ENCODE measurements at regions of chr10 and their contacts with region 1.

Region 1: DNA sequence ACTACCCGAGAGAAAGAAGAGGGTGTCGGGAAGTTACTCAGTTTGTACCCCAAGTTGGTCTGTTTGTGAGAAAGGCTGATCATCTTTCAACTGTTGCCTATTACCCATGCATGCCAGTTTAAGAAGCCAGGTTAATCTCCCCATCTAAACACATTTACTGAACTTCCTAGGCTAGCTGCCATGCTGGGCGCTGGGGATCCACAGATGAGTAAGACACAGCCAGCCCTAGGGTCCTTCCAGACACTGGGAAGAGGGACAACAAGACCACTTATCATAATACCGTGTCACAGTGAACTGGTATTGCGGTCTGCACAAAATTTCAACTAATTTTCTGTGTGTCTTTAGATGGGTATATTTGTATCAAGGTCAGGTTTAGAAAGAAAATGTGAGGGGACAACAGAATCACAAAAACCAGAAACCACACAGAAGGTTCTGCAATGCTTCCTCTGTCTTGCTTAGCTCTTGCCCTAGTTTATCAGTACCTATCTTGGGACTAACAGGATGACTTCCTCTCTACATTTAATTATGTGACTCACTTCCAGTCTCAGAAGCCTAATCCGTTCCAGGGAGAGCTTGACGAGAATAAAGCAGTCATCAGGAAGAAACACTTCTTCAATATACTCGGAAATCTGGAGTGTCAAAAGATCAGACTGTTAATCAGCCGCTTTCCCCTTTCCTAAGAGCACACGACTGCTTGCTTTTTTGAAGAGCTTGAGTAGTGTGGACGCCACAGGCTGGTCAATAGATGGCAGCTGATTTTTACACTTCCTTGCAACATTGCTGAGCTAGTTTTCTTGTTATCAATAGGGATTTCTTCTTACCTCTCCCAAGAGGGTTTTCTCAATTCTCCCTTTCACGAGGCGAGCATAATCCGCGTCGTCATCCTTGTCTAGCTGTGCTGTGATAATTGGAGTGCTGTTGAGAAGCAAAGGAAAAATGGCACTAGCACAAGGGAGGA is 45.7 kb downstream of the POLR3A start:
- DNase-seq: no peak

Region 2: GRCh38 chr10:77837240-77837924 is 146.3 kb before region 1 on chr10:
- CTCF ChIA-PET with region 1: no interaction called
- POLR2A ChIA-PET with region 1: no interaction called
- DNase-seq: peak; percentile 46

Region 3: DNA sequence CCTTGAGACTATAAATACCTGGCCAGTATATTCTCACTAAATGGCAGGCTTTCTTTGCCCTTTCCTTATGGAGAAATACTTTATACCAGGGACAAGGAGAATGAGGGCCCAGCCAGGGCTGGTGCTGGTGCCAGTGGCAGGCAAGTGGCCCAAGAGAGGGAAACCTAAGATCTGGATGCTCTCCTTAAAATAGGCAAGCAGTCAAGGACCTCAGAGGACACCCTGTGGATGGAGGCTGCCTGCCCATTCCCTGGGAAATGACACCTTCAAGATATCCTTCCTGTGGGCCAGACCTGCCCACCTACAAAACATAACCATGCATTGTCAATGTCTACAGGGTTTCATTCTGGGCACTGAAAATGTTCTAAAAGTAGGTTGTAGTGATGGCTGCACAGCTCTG is 16.5 kb after region 1 on chr10:
- CTCF ChIA-PET with region 1: no interaction called
- POLR2A ChIA-PET with region 1: no interaction called
- DNase-seq: no peak

Region 4: DNA sequence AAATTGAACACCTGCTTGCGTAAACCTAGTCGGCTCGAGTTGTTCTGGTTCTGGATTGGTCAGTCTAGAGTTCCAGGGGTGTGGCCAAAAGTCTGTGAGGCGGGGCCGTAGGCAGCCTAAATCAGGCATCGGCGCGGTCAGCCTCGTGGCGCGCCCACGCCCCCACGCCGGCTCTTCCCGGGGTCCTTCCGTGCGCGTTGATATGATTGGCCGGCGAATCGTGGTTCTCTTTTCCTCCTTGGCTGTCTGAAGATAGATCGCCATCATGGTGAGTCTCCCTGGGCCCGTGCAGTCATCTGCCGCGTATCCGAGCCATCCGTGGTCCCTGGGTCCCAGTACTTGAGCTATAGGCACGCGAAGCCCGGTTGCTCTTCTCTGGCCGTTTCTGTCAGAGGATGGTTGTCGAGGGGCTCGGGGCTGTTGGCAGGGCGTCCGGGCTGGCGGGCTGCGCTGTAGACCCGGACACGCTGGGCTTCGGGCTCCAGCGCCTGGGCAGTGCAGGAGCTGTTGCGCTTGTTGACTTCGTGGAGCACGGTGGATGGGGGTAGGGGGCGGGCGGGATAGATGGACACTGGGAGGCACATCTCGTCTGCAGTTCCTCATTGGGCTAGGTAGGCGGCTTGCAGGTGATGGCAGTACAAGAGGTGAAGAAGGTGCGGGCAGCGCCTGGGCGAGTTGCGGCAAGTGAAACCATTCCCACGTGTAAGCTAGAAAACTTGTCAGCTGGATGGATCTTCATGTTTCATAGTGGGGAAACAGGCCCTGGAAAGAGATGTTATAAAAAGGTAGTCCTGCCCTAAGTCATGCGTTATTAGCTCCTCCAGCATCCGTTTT is 50.2 kb after region 1 on chr10 and contains the start of gene RPS24:
- CTCF ChIA-PET with region 1: interaction called, 10 read pairs
- POLR2A ChIA-PET with region 1: no interaction called
- DNase-seq: peak; percentile 92